ENCODE measurements at regions of chr15 and their contacts with region 1.

Region 1: DNA sequence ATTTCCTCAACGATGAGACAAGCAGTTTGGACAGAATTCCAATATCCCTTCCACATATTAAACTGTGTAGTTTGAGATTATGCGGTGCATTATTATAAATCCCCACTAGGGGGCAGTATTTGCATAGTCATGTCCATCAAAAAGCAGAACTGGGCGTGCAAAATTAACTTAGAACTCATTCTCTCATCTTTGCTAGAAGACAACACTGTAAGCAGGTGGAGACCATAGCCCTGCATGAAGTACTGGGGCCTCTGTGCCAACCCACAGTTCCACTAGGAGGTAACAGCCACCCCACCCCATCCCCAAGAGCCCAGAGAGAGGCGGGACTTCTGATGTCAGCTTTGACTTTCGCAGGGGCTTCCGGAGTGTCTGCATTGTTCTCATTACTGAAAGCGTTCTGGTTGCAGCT is 106.6 kb upstream of the TMC3 start:
- DNase-seq: no peak
- H3K4me3 Mint-ChIP-seq: no peak overlapping the region
- H3K27ac Mint-ChIP-seq: no peak overlapping the region
- H3K4me1 Mint-ChIP-seq: no peaks in the 10 kb centered on the region
- H3K27me3 Mint-ChIP-seq: peaks cover 2% of the 10 kb centered on the region

Region 2: DNA sequence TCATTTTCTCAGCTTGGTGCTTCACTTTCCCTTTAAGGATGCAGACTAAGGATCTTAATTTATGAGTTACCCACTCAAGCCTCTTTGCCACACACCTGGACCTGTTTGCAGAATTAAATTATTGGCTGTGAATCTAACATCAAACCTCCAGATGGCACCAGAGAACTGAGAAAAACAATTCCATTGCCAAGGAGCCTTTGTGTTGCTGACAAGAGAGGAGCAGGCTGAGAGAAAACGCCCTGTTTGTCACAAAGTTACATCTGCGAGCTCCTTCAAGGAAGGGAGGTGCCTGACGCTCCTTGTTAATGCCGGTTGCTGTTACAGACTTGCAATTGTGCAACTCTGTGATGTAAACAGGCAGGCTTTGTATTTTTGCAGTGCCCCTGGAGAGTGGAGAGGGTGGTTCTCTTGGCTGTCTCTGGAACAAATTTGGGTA is 70.3 kb before region 1 on chr15:
- intact Hi-C with region 1: loop called (anchors 1 kb)
- DNase-seq: peak; percentile 19
- H3K4me3 Mint-ChIP-seq: no peak overlapping the region
- H3K27ac Mint-ChIP-seq: no peak overlapping the region
- H3K4me1 Mint-ChIP-seq: peaks cover 13% of the 10 kb centered on the region
- H3K27me3 Mint-ChIP-seq: peaks cover 21% of the 10 kb centered on the region

Region 3: GRCh38 chr15:81939604-81940440 is 459.2 kb after region 1 on chr15:
- intact Hi-C with region 1: loop called (anchors 2 kb)
- DNase-seq: no peak
- H3K4me3 Mint-ChIP-seq: no peak overlapping the region
- H3K27ac Mint-ChIP-seq: no peak overlapping the region
- H3K4me1 Mint-ChIP-seq: no peaks in the 10 kb centered on the region
- H3K27me3 Mint-ChIP-seq: peaks cover 7% of the 10 kb centered on the region